GM23248 (cell line): ENCODE measurements at regions of chr16 and their contacts with region 1.

Region 1: DNA sequence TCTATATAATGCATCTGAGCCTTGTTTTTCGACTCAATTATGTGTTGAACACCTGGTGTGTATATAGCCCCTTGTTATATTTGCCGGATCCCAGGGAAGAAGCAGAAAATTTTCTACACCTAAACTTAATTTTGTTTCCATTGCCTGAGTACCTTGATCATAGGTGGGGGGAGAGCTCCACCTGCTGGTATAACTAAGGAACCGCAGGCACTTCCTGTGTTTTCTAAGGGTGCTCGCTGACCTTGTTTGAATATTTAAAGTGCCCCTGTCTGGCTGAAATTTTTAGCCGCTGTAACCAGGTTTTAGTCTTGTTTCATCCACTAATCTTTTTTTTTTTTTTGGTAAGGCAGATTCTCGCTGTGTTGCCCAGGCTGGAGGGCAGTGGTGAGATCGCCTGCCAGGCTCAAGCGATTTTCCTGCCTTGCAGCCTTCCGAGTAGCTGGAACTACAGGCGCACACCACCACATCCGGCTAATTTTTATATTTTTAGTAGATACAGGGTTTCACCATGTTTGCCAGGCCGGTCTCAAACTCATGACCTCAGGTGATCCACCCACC is 6.5 kb upstream of the NUBP1 start:
- DNase-seq: peak; percentile 66
- H3K4me3 ChIP-seq: no peak overlapping the region
- H3K27ac ChIP-seq: no peak overlapping the region
- H3K4me1 ChIP-seq: peaks cover 16% of the 10 kb centered on the region
- H3K27me3 ChIP-seq: no peaks in the 10 kb centered on the region

Region 2: GRCh38 chr16:10078541-10078949 is 658.6 kb before region 1 on chr16:
- in situ Hi-C with region 1: no loop called
- DNase-seq: no peak
- H3K4me3 ChIP-seq: no peak overlapping the region
- H3K27ac ChIP-seq: no peak overlapping the region
- H3K4me1 ChIP-seq: no peaks in the 10 kb centered on the region
- H3K27me3 ChIP-seq: no peaks in the 10 kb centered on the region

Region 3: GRCh38 chr16:10266809-10267208 is 470.3 kb before region 1 on chr16:
- in situ Hi-C with region 1: loop called (anchors 10 kb)
- DNase-seq: no peak
- H3K4me3 ChIP-seq: no peak overlapping the region
- H3K27ac ChIP-seq: no peak overlapping the region
- H3K4me1 ChIP-seq: no peaks in the 10 kb centered on the region
- H3K27me3 ChIP-seq: no peaks in the 10 kb centered on the region